GM18951 (cell line): ENCODE measurements at regions of chr4 and their contacts with region 1.

Region 1: DNA sequence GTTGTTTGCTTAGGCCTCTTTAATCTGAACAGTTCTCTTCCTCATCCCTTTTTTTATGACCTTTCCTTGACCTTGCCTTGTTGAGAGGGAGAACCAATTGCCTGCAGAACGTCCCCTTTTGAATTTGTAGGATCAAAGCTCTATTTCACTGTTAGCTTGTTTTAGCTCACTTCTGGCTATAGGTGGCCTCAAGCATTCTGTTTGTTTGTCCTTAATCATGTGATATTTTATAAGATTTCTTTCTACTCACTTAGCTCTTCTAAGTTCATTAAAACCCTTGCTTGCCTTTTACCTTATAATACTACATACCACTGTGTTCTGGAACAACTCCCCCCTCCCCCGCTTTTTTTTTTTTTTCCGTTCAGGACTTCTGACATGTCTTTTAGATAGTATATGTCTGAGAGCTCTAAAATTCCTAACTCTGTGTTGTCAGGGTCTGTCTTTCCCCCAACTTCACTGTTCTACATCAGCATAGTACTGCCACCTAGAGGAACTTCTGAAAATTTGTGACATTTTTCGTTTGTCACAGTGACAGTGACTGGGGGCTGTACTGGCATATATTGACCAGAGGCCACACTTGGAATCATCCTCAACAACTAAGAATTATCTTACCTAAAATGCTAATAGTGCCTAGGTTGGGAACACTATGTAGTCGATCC is 128.5 kb downstream of the LARP7 start:
- POLR2A ChIP-seq: no peak

Region 2: DNA sequence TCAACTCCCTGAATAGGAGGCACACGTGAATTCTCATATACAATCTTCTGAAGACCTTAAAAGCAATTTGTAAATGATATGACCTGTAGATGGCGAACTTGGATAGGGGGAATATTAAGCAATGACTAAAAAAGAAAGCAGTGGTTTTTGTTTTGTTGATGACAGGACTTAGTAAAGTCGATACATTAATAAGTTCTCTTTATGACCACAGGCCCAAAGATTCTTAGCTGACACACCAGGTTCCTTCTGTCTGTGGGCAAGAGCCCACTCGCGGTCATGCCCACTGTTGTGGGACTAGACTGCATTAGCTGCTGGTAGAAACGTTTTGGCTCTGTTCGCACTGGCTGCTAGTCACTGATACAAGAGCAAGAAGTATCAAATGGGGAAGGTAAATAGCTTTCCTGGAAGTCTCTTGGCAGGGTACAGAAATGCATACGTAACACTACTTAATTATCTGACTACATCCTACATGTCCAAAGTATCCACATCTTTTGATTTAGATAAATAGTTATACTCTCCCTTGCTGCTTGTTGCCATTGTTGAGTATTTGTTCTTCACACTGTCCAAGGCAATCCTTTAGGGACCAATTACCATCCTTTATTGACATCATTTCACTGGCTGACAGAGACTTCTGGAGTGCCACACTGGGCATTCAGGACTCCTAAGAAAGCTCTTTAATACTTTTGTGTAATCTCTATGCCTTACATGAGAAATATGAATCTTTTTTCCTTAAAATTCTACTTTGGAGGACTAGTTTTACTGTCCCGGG is 437.3 kb before region 1 on chr4:
- in situ Hi-C with region 1: loop called (anchors 25 kb)
- POLR2A ChIP-seq: no peak

Region 3: DNA sequence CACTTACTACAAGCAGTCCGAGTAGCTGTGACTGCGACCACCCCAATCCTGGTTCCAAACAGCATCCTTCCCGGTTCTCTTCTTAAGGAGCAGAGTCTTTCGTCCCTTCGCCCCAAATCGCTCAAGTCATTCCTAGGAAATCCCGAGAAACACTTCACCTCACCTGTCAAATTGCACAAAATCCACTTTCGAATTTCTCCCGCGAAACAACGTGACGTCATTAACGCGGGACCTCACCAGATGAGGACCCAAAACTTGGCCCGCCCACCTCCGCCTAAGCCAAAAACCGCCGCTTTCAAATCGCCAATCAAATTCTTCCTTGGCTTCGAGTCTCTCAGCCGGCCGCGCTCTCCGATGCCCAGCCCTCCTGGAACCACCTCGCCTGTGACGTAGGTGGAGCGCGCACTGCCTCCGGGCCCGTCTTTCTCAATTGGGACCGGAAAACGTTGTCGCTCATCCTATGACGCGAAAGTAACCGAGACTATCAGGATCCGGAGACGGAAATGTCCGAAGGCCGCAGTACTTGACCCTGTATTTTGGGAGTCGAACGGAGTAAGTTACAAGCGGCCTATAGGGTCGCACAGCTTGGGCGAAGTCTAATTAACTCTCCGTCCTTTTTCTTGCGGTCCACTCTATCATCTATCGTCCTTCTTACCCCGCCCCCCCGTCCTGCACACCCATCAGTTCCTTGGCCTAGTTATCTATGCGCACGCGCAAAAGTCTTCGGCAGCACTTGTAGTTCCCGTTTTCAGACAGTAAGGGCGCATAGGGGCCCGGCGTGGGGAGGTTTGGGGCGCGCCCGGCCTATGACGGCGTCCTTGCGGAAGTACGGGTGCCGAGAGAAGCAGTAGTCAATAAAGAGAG is 128.5 kb before region 1 on chr4 and contains the starts of genes LARP7 and ZGRF1:
- in situ Hi-C with region 1: loop called (anchors 5 kb)
- POLR2A ChIP-seq: peak; percentile 56

Region 4: DNA sequence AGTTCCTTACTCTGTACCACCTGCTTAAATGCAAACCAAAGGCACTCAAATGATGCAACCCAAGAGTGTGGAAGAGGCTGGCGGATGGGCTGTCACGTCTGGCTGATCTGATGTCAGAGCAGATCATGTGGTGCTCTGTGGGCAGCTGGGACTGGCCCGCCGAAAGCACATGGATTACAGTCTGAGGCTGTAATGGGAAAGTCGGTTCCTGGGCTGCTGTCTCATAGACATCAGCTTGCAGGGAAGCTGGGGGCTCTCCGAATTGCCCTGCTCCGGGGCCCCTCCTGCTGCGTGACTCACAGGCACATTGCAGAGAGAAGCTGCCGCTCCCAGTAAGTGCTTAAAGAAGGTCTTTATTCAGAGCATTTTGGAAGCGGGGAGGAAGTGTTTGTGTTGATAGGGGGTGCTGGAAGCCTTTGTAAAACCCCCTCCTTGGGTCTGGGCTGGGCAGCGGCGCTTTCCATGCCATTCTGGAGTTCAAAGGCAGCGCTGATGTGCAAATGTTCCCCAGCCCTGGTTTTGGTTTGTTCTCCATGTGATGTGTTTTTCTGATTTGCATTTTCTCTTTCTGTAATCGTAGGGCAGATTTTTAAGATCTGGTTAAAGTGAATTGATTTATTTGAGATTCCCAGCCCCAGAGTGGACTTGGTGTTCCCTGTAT is 52.6 kb after region 1 on chr4:
- in situ Hi-C with region 1: no loop called
- POLR2A ChIP-seq: peak; percentile 60